Transverse colon (tissue), 4 donors: ENCODE measurements at regions of chr1 and their contacts with region 1.

Region 1: GRCh38 chr1:13725714-13726175 is 25.8 kb downstream of the PRDM2 start:
- DNase-seq: peak; percentile 59
- H3K4me3 ChIP-seq: no peak overlapping the region
- H3K27ac ChIP-seq: no peak overlapping the region
- H3K4me1 ChIP-seq: peaks cover 0 to 8% (median 3%) of the 10 kb centered on the region in 4 donors
- H3K27me3 ChIP-seq: no peaks in the 10 kb centered on the region
- CTCF ChIP-seq: peak; percentile 38 to 67 (median 51)
- EP300 ChIP-seq: no peak
- POLR2A ChIP-seq: no peak

Region 2: DNA sequence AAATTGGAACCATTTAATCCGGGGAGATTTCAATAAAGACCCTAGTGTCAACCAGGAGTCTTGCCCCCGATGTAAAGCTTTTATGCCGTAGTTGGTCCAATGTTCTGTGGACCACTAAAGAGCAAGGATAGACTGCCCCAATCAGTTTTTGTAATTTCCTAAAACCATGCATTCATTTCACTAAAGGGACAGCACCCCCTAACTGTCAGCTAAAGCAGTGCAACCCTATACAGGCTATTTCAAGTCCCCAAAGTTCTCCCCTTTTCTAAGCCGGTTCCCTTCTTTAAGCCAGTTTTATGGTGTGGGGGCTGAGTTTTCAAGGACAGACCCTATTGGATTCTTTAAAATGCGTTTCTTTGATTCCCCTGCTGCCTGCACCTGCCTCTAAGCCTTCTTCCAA is 154.8 kb before region 1 on chr1:
- in situ Hi-C with region 1: no loop called
- intact Hi-C with region 1: no loop called
- DNase-seq: no peak
- H3K4me3 ChIP-seq: no peak overlapping the region
- H3K27ac ChIP-seq: no peak overlapping the region
- H3K4me1 ChIP-seq: no peaks in the 10 kb centered on the region
- H3K27me3 ChIP-seq: peaks cover 8% of the 10 kb centered on the region
- CTCF ChIP-seq: peak in 2 of 5 experiments; percentile 14 to 24
- EP300 ChIP-seq: no peak
- POLR2A ChIP-seq: no peak

Region 3: DNA sequence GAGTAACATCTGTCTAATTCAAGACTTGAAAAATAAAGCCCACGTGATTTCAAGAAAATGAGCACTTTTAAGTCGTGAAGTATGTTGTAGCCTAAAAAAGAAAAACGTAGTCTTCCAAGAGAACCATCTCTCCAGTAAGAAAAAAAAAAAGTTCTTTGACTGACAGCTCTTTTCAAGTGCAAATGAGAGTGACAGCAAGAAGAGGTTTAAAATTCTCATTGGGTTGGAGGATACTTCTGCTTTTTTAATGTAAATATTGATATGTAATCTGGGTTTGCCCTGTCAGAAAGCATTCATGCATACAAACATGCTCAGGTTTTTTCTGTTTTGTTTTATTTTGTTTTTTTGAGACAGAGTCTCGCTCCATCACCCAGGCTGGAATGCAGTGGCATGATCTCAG is 58.1 kb before region 1 on chr1:
- in situ Hi-C with region 1: loop called in 3 of 4 experiments (anchors 5 to 10 kb)
- intact Hi-C with region 1: no loop called
- DNase-seq: no peak
- H3K4me3 ChIP-seq: no peak overlapping the region
- H3K27ac ChIP-seq: no peak overlapping the region
- H3K4me1 ChIP-seq: peaks cover 0 to 4% (median 0%) of the 10 kb centered on the region in 4 donors
- H3K27me3 ChIP-seq: peaks cover 7% of the 10 kb centered on the region
- CTCF ChIP-seq: no peak
- EP300 ChIP-seq: no peak
- POLR2A ChIP-seq: no peak

Region 4: DNA sequence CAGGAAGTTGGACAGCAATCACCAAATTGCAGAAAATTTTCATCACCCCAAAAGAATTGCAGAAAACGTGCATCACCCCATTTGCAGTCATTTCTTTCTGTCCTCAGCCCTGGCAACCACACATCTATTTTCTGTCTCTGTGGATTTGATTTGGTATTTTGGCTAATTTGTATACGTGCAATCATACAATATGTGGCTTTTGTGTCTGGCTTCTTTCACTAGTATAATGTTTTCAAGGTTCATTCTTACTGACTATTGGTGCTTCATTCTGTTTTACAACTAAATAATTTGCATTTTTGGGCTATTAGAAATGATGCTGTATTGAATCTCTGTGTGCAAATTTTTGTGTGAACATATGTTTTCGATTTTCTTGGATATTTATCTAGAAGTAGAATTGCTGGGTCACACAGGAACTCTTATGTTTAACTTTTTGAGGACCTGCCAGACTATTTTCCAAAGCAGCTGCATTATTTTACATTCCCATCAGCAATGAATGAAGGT is 50.5 kb before region 1 on chr1:
- in situ Hi-C with region 1: loop called in 1 of 4 experiments (anchors 10 kb)
- intact Hi-C with region 1: no loop called
- DNase-seq: no peak
- H3K4me3 ChIP-seq: no peak overlapping the region
- H3K27ac ChIP-seq: no peak overlapping the region
- H3K4me1 ChIP-seq: no peaks in the 10 kb centered on the region
- H3K27me3 ChIP-seq: peaks cover 16% of the 10 kb centered on the region
- CTCF ChIP-seq: no peak
- EP300 ChIP-seq: no peak
- POLR2A ChIP-seq: no peak